ENCODE measurements at regions of chr12 and their contacts with region 1.

Region 1: GRCh38 chr12:56571126-56571525 is 49.5 kb downstream of the RBMS2 start:
- DNase-seq: no peak
- ATAC-seq: no peak
- H3K4me3 ChIP-seq: no peak overlapping the region
- H3K4me3 Mint-ChIP-seq: peak overlapping the region in 1 of 3 donors; percentile 69
- H3K27ac ChIP-seq: no peak overlapping the region
- H3K27ac Mint-ChIP-seq: no peak overlapping the region
- H3K4me1 ChIP-seq: peaks cover 15 to 24% of the 10 kb centered on the region in 2 experiments
- H3K4me1 Mint-ChIP-seq: peaks cover 22 to 25% (median 23%) of the 10 kb centered on the region in 3 donors
- H3K27me3 ChIP-seq: no peaks in the 10 kb centered on the region
- H3K27me3 Mint-ChIP-seq: no peaks in the 10 kb centered on the region

Region 2: GRCh38 chr12:56117778-56118687 is 453.1 kb before region 1 on chr12 and contains the start of gene ZC3H10:
- CTCF ChIA-PET with region 1: interaction called in 1 of 2 experiments, 15 read pairs
- POLR2A ChIA-PET with region 1: no interaction called
- DNase-seq: peak; percentile 87 to 99 (median 96)
- ATAC-seq: peak; percentile 76 to 79 (median 76)
- H3K4me3 ChIP-seq: peak within 1 kb of the TSS; percentile 79 to 94
- H3K4me3 Mint-ChIP-seq: peak within 1 kb of the TSS; percentile 94 to 99 (median 94)
- H3K27ac ChIP-seq: peak within 1 kb of the TSS; percentile 92
- H3K27ac Mint-ChIP-seq: peak within 1 kb of the TSS; percentile 97 to 98
- H3K4me1 ChIP-seq: peaks cover 11 to 29% of the 10 kb centered on the region in 2 experiments
- H3K4me1 Mint-ChIP-seq: peaks cover 34 to 39% (median 37%) of the 10 kb centered on the region in 3 donors
- H3K27me3 ChIP-seq: no peaks in the 10 kb centered on the region
- H3K27me3 Mint-ChIP-seq: no peaks in the 10 kb centered on the region
- total RNA-seq, gene ZC3H10: 8.4 to 15.1 (median 11.4) TPM

Region 3: GRCh38 chr12:56468216-56469006 is 102.7 kb before region 1 on chr12 and contains the start of gene SPRYD4:
- CTCF ChIA-PET with region 1: no interaction called
- POLR2A ChIA-PET with region 1: no interaction called
- DNase-seq: peak; percentile 86 to 97 (median 93)
- ATAC-seq: peak; percentile 94 to 98 (median 96)
- H3K4me3 ChIP-seq: peak within 1 kb of the TSS; percentile 68 to 84
- H3K4me3 Mint-ChIP-seq: peak within 1 kb of the TSS; percentile 94 to 97 (median 94)
- H3K27ac ChIP-seq: peak within 1 kb of the TSS; percentile 82
- H3K27ac Mint-ChIP-seq: peak within 1 kb of the TSS; percentile 89 to 98
- H3K4me1 ChIP-seq: peaks cover 5 to 23% of the 10 kb centered on the region in 2 experiments
- H3K4me1 Mint-ChIP-seq: peaks cover 29 to 33% (median 32%) of the 10 kb centered on the region in 3 donors
- H3K27me3 ChIP-seq: no peaks in the 10 kb centered on the region
- H3K27me3 Mint-ChIP-seq: no peaks in the 10 kb centered on the region
- total RNA-seq, gene SPRYD4: 4.7 to 7.3 (median 5.5) TPM

Region 4: GRCh38 chr12:56521590-56522371 is 49.3 kb before region 1 on chr12 and contains the start of gene RBMS2:
- CTCF ChIA-PET with region 1: interaction called, 9 to 14 read pairs
- POLR2A ChIA-PET with region 1: interaction called in 1 of 2 experiments, 10 read pairs
- DNase-seq: peak in 32 of 35 experiments; percentile 15 to 76 (median 35)
- ATAC-seq: peak; percentile 69 to 97 (median 83)
- H3K4me3 ChIP-seq: peak within 1 kb of the TSS; percentile 41 to 46
- H3K4me3 Mint-ChIP-seq: peak within 1 kb of the TSS; percentile 71 to 80 (median 76)
- H3K27ac ChIP-seq: peak within 1 kb of the TSS; percentile 51
- H3K27ac Mint-ChIP-seq: peak within 1 kb of the TSS; percentile 66 to 70
- H3K4me1 ChIP-seq: peaks cover 12 to 19% of the 10 kb centered on the region in 2 experiments
- H3K4me1 Mint-ChIP-seq: peaks cover 27 to 33% (median 31%) of the 10 kb centered on the region in 3 donors
- H3K27me3 ChIP-seq: no peaks in the 10 kb centered on the region
- H3K27me3 Mint-ChIP-seq: no peaks in the 10 kb centered on the region
- total RNA-seq, gene RBMS2: 0.99 to 8.3 (median 4.1) TPM

Region 5: DNA sequence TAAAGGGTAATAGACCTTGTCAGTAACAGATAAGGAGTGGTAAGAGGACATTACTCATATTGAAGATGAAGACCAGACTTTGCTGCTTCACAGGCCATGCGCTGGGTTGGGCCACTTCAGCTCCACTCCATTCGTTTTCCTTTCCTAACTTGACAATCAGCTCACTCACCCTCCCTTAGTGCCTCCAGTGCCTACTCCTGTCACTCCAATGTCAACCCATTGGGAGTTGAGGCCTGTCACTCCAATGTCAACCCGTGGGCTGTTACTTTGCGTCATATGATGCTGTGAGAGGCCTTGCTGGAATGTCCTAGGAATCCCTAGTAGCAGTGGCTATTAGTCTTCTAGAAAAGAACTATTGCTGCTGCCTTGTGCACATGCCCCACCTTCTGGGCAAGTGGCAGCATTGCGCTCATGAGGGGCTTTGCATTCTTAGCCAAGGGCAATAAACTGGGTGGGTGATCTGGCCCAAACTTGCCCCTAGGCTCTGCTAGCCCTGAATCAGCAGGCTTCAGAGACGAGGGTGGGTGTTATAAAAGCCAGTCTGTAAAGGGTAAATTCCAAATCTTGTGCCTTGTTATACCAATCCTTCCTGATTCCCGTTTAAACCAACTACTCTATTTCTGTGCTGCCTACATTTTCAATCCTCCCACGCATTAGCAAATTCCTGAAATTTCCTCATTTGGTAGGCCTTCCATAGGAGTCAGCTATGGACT is 22.9 kb after region 1 on chr12:
- CTCF ChIA-PET with region 1: interaction called, 3 to 6 read pairs
- POLR2A ChIA-PET with region 1: interaction called, 6 to 10 read pairs
- DNase-seq: peak; percentile 17 to 73 (median 52)
- ATAC-seq: peak; percentile 56 to 66 (median 62)
- H3K4me3 ChIP-seq: no peak overlapping the region
- H3K4me3 Mint-ChIP-seq: no peak overlapping the region
- H3K27ac ChIP-seq: no peak overlapping the region
- H3K27ac Mint-ChIP-seq: no peak overlapping the region
- H3K4me1 ChIP-seq: no peaks in the 10 kb centered on the region
- H3K4me1 Mint-ChIP-seq: peaks cover 0 to 2% (median 0%) of the 10 kb centered on the region in 3 donors
- H3K27me3 ChIP-seq: no peaks in the 10 kb centered on the region
- H3K27me3 Mint-ChIP-seq: no peaks in the 10 kb centered on the region

Region 6: DNA sequence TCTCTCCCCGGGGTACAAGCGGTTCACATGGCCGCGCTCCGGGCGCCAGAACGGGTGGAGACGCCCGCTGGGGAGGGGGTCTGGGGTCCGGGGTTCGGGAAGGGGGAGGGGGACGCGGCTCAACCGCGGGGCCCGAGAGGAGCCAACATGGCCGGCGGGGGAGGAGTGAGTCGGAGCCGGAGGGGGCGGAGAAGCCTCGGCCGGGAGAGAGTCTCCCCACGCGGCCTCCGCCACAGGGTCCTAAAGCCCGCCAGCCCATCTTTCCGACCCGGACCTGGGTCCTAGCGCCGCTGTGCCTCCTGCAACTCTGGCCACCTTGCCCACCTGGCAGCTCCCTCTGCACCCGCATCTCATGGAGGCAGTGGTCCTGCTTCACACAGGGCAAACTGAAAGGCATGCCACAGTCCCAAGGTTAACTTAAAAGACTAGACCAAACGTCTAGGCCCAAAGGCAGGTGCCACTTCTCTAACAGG is 59.1 kb after region 1 on chr12 and contains the start of gene BAZ2A:
- CTCF ChIA-PET with region 1: interaction called, 5 to 10 read pairs
- POLR2A ChIA-PET with region 1: no interaction called
- DNase-seq: peak; percentile 59 to 90 (median 80)
- ATAC-seq: peak; percentile 74 to 77 (median 76)
- H3K4me3 ChIP-seq: peak within 1 kb of the TSS; percentile 98 to 100
- H3K4me3 Mint-ChIP-seq: peak within 1 kb of the TSS; percentile 86 to 100 (median 93)
- H3K27ac ChIP-seq: peak within 1 kb of the TSS; percentile 89
- H3K27ac Mint-ChIP-seq: peak within 1 kb of the TSS; percentile 91 to 94
- H3K4me1 ChIP-seq: peaks cover 31 to 69% of the 10 kb centered on the region in 2 experiments
- H3K4me1 Mint-ChIP-seq: peaks cover 71 to 80% (median 72%) of the 10 kb centered on the region in 3 donors
- H3K27me3 ChIP-seq: no peaks in the 10 kb centered on the region
- H3K27me3 Mint-ChIP-seq: no peaks in the 10 kb centered on the region
- total RNA-seq, gene BAZ2A: 149 to 257 (median 172) TPM

Region 7: DNA sequence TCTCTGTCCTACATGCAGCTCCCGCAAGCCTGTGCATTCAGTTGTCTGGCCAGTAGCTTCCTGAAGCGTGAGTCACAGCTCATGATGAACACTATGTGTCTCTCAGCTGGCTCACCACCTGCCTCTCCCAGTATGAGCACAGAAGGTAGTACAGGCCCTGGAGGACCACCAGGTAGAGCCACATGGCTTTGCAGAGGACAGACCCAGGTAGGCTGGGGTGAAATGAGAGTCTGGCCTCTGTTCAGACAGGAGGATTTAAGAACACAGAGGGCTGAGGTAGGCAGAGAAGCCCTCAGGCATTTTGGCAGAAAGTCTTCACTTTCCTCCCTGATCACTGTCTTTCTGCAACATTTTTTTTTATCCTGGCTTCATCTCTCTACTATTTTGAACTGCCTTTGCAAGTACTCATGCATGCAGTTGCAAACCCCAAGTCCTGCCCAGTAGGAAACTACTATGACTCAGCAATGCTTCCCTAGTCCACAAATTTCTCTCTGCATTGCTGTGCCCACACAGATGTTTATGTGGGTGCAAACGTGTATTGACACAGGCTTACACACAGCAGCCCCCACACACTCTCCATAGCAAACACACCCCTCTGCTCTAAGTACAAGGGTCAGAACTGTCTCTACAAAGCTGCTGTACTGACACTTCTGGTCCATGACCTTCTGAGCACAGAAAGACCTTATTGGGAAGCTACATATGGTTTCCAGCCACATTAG is 370.3 kb after region 1 on chr12:
- CTCF ChIA-PET with region 1: no interaction called
- POLR2A ChIA-PET with region 1: interaction called in 1 of 2 experiments, 11 read pairs
- DNase-seq: no peak
- ATAC-seq: no peak
- H3K4me3 ChIP-seq: no peak overlapping the region
- H3K4me3 Mint-ChIP-seq: no peak overlapping the region
- H3K27ac ChIP-seq: no peak overlapping the region
- H3K27ac Mint-ChIP-seq: no peak overlapping the region
- H3K4me1 ChIP-seq: no peaks in the 10 kb centered on the region
- H3K4me1 Mint-ChIP-seq: no peaks in the 10 kb centered on the region
- H3K27me3 ChIP-seq: peaks cover 0 to 8% of the 10 kb centered on the region in 2 experiments
- H3K27me3 Mint-ChIP-seq: peaks cover 10 to 12% of the 10 kb centered on the region in 2 donors

Region 8: GRCh38 chr12:57390174-57390573 is 819.0 kb after region 1 on chr12:
- CTCF ChIA-PET with region 1: no interaction called
- POLR2A ChIA-PET with region 1: no interaction called
- DNase-seq: no peak
- ATAC-seq: no peak
- H3K4me3 ChIP-seq: no peak overlapping the region
- H3K4me3 Mint-ChIP-seq: no peak overlapping the region
- H3K27ac ChIP-seq: no peak overlapping the region
- H3K27ac Mint-ChIP-seq: no peak overlapping the region
- H3K4me1 ChIP-seq: no peaks in the 10 kb centered on the region
- H3K4me1 Mint-ChIP-seq: peaks cover 8 to 15% (median 8%) of the 10 kb centered on the region in 3 donors
- H3K27me3 ChIP-seq: no peaks in the 10 kb centered on the region
- H3K27me3 Mint-ChIP-seq: no peaks in the 10 kb centered on the region